WTC11 (cell line): ENCODE measurements at regions of chr15 and their contacts with region 1.

Region 1: DNA sequence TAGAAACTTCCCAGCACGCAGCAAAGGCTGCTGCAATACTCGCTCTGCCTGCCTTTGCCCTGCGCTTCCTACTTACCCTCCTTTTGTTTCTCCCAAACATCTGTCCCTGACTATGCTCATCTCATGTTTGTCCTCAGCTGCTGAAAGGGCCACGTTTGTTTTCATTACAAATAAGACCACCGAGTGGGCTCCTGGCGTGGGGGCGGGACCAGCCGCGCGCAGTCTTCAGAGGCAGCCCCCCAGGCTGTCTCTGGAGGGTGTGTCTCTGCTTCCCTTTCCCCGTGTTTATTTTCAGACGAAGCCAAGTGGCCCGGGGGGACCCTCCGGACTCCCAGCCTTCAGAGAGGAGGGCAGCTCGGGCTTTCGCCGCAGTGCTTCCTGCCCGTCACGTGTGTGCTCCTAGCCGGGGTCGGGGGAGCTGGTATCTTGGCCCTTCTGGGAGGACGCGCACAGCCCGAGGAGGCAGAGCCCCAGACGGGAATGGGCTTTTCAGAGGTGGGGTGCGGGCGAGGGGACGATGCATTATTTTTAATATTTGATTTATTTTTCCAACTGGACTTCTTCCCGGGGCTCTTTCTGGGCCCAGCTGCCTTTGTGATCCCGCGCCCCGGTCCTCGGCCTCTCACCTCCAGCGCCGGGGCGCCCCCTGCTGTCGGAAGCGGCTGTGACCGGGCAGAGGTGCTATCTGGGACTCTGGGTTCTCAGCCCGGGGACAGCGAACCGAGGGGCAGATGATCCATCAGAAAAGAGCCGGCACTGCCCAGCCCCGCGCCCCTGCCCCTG is 70.0 kb upstream of the CGNL1 start:
- DNase-seq: peak; percentile 98
- ATAC-seq: peak; percentile 88
- H3K4me3 Mint-ChIP-seq: peak overlapping the region; percentile 75
- H3K27ac Mint-ChIP-seq: peak overlapping the region; percentile 88
- H3K4me1 Mint-ChIP-seq: peaks cover 30% of the 10 kb centered on the region
- H3K27me3 Mint-ChIP-seq: no peaks in the 10 kb centered on the region; the same call in 1 of the 2 replicates
- CTCF ChIP-seq: peak; percentile 88

Region 2: DNA sequence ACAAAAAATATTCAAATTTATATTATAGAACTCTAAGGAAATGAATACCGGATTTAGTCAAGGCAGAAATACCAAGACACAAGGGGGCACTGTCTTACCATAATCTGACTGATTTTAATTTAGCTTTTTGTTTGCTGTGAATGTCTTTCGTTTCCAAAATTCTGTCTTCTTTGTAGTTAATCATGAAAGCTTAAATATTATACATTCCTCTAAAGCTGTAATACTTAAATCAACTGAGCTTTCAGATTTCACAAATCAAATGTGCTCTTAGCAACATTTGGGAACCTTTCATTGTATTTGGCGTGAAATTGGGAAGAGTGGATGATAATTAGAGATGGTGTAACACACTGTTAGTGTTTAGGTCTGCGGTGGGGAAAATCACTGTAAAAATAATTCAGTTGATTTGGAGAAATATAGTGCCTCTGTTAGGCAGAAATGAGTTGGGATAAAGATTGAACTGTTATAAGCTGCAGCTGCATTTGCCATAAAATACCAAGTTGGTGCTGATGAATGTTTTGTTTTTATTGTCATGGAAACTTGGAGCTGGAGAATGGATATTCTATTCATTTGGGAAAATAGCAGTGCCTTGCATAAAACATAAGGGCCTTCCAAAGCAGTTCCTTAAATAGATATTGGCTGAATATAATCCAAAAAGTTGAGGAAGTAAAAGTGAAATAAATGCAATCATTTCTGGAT is 159.7 kb before region 1 on chr15:
- CTCF ChIA-PET with region 1: interaction called, 100 read pairs
- POLR2A ChIA-PET with region 1: interaction called, 4 read pairs
- DNase-seq: no peak
- ATAC-seq: no peak
- H3K4me3 Mint-ChIP-seq: peak overlapping the region; percentile 45
- H3K27ac Mint-ChIP-seq: peak overlapping the region; percentile 88
- H3K4me1 Mint-ChIP-seq: peaks cover 19% of the 10 kb centered on the region
- H3K27me3 Mint-ChIP-seq: no peaks in the 10 kb centered on the region
- CTCF ChIP-seq: peak; percentile 45

Region 3: GRCh38 chr15:57213862-57214261 is 92.5 kb before region 1 on chr15:
- CTCF ChIA-PET with region 1: interaction called, 10 read pairs
- POLR2A ChIA-PET with region 1: no interaction called
- DNase-seq: no peak
- ATAC-seq: no peak; the same call in 1 of the 2 replicates
- H3K4me3 Mint-ChIP-seq: no peak overlapping the region
- H3K27ac Mint-ChIP-seq: no peak overlapping the region
- H3K4me1 Mint-ChIP-seq: peaks cover 61% of the 10 kb centered on the region
- H3K27me3 Mint-ChIP-seq: no peaks in the 10 kb centered on the region
- CTCF ChIP-seq: no peak

Region 4: GRCh38 chr15:57259568-57260040 is 46.7 kb before region 1 on chr15:
- CTCF ChIA-PET with region 1: interaction called, 13 read pairs
- POLR2A ChIA-PET with region 1: no interaction called
- DNase-seq: peak; percentile 65
- ATAC-seq: peak; percentile 100
- H3K4me3 Mint-ChIP-seq: peak overlapping the region; percentile 64
- H3K27ac Mint-ChIP-seq: peak overlapping the region; percentile 94
- H3K4me1 Mint-ChIP-seq: peaks cover 42% of the 10 kb centered on the region
- H3K27me3 Mint-ChIP-seq: no peaks in the 10 kb centered on the region
- CTCF ChIP-seq: no peak

Region 5: DNA sequence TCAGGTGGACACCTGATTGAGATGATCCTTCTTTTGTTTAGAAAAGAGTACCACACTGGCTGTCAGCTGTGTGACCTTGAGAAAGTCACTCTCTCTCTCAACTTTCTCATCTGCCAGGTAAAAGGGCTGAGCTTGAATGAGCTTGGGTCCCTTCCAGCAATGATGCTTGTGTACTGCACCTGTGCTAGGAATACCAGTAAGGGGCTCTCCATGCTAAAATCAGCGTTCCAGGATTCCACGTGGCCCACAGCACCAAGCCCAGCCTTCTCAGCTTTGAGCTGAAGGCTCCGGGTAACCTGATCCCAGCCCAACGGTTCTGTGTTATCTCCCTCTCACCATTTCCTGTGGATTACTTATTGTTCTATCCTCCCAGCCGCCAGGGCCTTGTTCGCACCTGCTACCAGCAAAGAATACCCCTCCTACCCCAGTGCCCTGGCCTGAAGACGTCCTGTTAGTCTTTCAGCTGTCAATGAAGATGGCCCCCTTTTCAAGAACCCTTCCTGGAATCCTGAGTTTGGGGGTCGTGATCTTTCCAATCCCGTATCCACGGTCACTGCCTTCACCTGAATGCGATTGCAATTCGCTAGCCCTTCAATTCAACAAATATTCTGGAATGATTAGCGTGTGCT is 15.7 kb after region 1 on chr15:
- CTCF ChIA-PET with region 1: interaction called, 18 read pairs
- POLR2A ChIA-PET with region 1: no interaction called
- DNase-seq: no peak
- ATAC-seq: peak; percentile 60
- H3K4me3 Mint-ChIP-seq: no peak overlapping the region
- H3K27ac Mint-ChIP-seq: no peak overlapping the region
- H3K4me1 Mint-ChIP-seq: peaks cover 44% of the 10 kb centered on the region
- H3K27me3 Mint-ChIP-seq: no peaks in the 10 kb centered on the region; the same call in 1 of the 2 replicates
- CTCF ChIP-seq: no peak

Region 6: GRCh38 chr15:57521503-57521902 is 215.2 kb after region 1 on chr15:
- CTCF ChIA-PET with region 1: no interaction called
- POLR2A ChIA-PET with region 1: no interaction called
- DNase-seq: no peak
- ATAC-seq: no peak
- H3K4me3 Mint-ChIP-seq: no peak overlapping the region
- H3K27ac Mint-ChIP-seq: no peak overlapping the region
- H3K4me1 Mint-ChIP-seq: no peaks in the 10 kb centered on the region
- H3K27me3 Mint-ChIP-seq: no peaks in the 10 kb centered on the region
- CTCF ChIP-seq: no peak